CD4-positive, alpha-beta T cell (primary cell): ENCODE measurements at regions of chr19 and their contacts with region 1.

Region 1: DNA sequence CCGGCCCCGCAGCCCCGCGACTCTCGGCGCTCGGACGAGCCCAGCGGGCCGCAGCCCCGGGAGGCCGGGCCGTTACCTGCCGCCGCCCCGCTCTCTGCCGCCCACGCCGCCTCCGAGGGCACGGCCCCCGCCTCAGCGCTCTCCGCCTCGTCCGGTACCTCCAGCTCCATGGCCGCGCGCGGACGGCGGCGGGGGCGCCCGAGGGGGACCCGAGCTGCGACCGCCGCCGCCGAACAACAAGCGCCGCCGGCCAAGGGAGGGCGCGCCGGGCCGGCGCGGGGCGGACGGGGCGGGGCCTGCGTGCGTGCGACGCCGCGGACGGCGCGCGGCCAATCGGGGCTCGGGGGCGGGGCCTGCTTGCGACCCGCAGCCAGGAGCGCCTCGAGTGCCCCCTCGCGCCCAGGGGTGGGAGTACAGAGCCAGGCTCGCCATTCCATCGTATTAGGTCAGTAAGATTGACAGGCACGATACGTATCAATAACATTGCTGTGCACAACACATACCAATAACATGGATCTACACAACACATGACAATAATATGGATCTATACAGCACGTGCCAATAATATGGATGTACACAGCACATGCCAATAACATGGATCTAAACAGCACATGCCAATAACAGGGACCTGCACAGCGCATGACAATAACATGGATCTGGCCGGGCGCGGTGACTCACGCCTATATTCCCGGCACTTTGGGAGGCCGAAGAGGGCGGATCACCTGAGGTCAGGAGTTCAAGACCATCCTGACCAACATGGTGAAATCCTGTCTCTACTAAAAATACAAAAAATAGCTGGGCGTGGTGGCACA is at the start of gene PIP5K1C:
- DNase-seq: peak; percentile 84 to 97 (median 92)
- ATAC-seq: peak; percentile 99
- H3K4me3 ChIP-seq: peak within 1 kb of the TSS; percentile 72
- H3K4me3 Mint-ChIP-seq: peak within 1 kb of the TSS; percentile 91
- H3K27ac ChIP-seq: no peak within 1 kb of the TSS
- H3K27ac Mint-ChIP-seq: peak within 1 kb of the TSS; percentile 73
- H3K4me1 ChIP-seq: peaks cover 37% of the 10 kb centered on the region
- H3K4me1 Mint-ChIP-seq: peaks cover 27% of the 10 kb centered on the region
- H3K27me3 ChIP-seq: peaks cover 0 to 2% of the 10 kb centered on the region in 2 experiments
- H3K27me3 Mint-ChIP-seq: no peaks in the 10 kb centered on the region
- CTCF ChIP-seq: peak; percentile 73
- total RNA-seq, gene PIP5K1C: 14.7 to 15.5 TPM

Region 2: GRCh38 chr19:3626473-3627350 is 73.7 kb before region 1 on chr19 and contains the start of gene CACTIN:
- CTCF ChIA-PET with region 1: interaction called, 3 read pairs
- POLR2A ChIA-PET with region 1: no interaction called
- intact Hi-C with region 1: loop called in 1 of 2 experiments (anchors 1 kb)
- DNase-seq: peak; percentile 97 to 99 (median 98)
- ATAC-seq: peak; percentile 97
- H3K4me3 ChIP-seq: peak within 1 kb of the TSS; percentile 85
- H3K4me3 Mint-ChIP-seq: peak within 1 kb of the TSS; percentile 92
- H3K27ac ChIP-seq: peak within 1 kb of the TSS; percentile 83 to 98
- H3K27ac Mint-ChIP-seq: peak within 1 kb of the TSS; percentile 94
- H3K4me1 ChIP-seq: peaks cover 35% of the 10 kb centered on the region
- H3K4me1 Mint-ChIP-seq: peaks cover 21% of the 10 kb centered on the region
- H3K27me3 ChIP-seq: no peaks in the 10 kb centered on the region
- H3K27me3 Mint-ChIP-seq: no peaks in the 10 kb centered on the region
- CTCF ChIP-seq: no peak
- total RNA-seq, gene CACTIN: 25.8 to 25.9 TPM

Region 3: DNA sequence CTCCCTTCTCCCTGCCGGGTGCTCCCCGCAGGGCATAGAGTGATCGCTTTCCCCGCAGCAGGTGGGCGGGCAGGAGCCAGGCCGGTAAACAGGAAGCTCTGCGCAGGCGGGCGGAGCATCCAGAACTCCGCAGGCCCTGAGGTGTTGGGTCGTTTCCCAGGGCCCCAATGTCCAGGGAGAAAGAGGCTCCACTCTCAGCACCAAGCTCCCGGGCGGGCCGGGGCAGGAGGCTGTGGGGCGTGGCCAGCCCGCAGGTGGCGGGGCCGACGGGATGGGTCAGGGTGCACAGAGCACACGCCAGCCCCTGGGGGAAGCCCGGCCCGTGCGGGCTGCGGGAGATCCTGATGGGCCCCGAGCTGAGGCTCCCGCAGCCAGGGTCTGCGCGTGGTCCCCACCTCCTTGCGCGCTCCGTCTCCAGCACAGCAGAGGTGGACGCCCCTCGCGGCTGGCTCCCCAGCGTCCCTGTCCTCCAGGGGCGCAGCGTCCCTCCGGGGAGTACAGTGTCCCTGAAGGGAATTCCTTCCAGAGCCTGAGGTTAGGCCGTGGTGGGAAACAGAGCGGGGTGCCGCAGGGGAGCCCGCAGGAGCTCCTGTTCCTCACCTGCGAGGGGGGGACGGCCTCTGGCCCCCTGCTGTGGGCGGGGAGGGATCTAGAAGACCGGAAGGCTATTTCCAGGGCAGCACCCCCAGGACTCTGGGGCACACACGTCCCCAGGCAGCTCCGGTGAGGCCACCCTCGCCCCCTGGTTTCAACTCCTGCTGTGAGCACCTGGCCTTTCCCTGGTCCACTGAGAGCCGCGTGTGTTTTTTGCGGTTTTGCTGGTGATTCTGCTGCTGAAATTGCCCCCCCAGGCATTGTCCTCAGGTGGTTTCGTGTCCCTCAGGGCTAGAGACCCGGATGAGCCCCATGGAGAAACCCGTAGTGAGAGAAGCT is 12.4 kb before region 1 on chr19:
- CTCF ChIA-PET with region 1: interaction called, 5 read pairs
- POLR2A ChIA-PET with region 1: interaction called, 49 read pairs
- intact Hi-C with region 1: no loop called
- DNase-seq: peak in 12 of 14 experiments; percentile 18 to 69 (median 54)
- ATAC-seq: peak; percentile 71
- H3K4me3 ChIP-seq: peak overlapping the region; percentile 53
- H3K4me3 Mint-ChIP-seq: peak overlapping the region; percentile 94
- H3K27ac ChIP-seq: peak overlapping the region; percentile 58 to 73
- H3K27ac Mint-ChIP-seq: peak overlapping the region; percentile 91
- H3K4me1 ChIP-seq: peaks cover 34% of the 10 kb centered on the region
- H3K4me1 Mint-ChIP-seq: peaks cover 60% of the 10 kb centered on the region
- H3K27me3 ChIP-seq: no peaks in the 10 kb centered on the region
- H3K27me3 Mint-ChIP-seq: no peaks in the 10 kb centered on the region
- CTCF ChIP-seq: no peak

Region 4: GRCh38 chr19:4208385-4209094 is 508.1 kb after region 1 on chr19:
- CTCF ChIA-PET with region 1: no interaction called
- POLR2A ChIA-PET with region 1: no interaction called
- intact Hi-C with region 1: loop called in 1 of 2 experiments (anchors 10 kb)
- DNase-seq: no peak
- ATAC-seq: no peak
- H3K4me3 ChIP-seq: no peak overlapping the region
- H3K4me3 Mint-ChIP-seq: no peak overlapping the region
- H3K27ac ChIP-seq: no peak overlapping the region
- H3K27ac Mint-ChIP-seq: no peak overlapping the region
- H3K4me1 ChIP-seq: peaks cover 3% of the 10 kb centered on the region
- H3K4me1 Mint-ChIP-seq: no peaks in the 10 kb centered on the region
- H3K27me3 ChIP-seq: peaks cover 0 to 5% of the 10 kb centered on the region in 2 experiments
- H3K27me3 Mint-ChIP-seq: peaks cover 9% of the 10 kb centered on the region
- CTCF ChIP-seq: peak; percentile 19